ENCODE measurements at regions of chr15 and their contacts with region 1.

Region 1: GRCh38 chr15:98518823-98519561 is 129.3 kb upstream of the IGF1R start:
- DNase-seq: peak; percentile 33
- ATAC-seq: peak; percentile 95
- H3K4me3 ChIP-seq: no peak overlapping the region
- H3K27ac ChIP-seq: peak overlapping the region; percentile 41; the same call in 1 of the 2 replicates
- H3K4me1 ChIP-seq: peaks cover 8% of the 10 kb centered on the region
- H3K27me3 ChIP-seq: no peaks in the 10 kb centered on the region
- CTCF ChIP-seq: peak; percentile 94

Region 2: GRCh38 chr15:98658831-98659699 is 140.1 kb after region 1 on chr15:
- CTCF ChIA-PET with region 1: interaction called, 4 read pairs
- POLR2A ChIA-PET with region 1: no interaction called
- in situ Hi-C with region 1: no loop called
- intact Hi-C with region 1: loop called (anchors 2 kb)
- DNase-seq: peak; percentile 39
- ATAC-seq: peak; percentile 90
- H3K4me3 ChIP-seq: 0 out of 4 replicates have a peak overlapping the region, but pooled peaks of 1 of the 2 experiments have one; percentile 8
- H3K27ac ChIP-seq: peak overlapping the region; percentile 13; the same call in 1 of the 2 replicates
- H3K4me1 ChIP-seq: peaks cover 57% of the 10 kb centered on the region
- H3K27me3 ChIP-seq: no peaks in the 10 kb centered on the region
- CTCF ChIP-seq: peak; percentile 95